Activated B cell treated with CpG ODN at 0.5 μM for 24 hours (primary cell): ENCODE measurements at regions of chr5 and their contacts with region 1.

Region 1: GRCh38 chr5:112529525-112529924 is 110.4 kb upstream of the EPB41L4A start:
- DNase-seq: no peak
- ATAC-seq: peak; percentile 53
- H3K4me3 Mint-ChIP-seq: no peak overlapping the region
- H3K27ac Mint-ChIP-seq: peak overlapping the region; percentile 48
- H3K4me1 Mint-ChIP-seq: peaks cover 96% of the 10 kb centered on the region
- H3K27me3 Mint-ChIP-seq: no peaks in the 10 kb centered on the region
- CTCF ChIP-seq: no peak

Region 2: GRCh38 chr5:112160652-112161391 is 368.7 kb before region 1 on chr5:
- CTCF ChIA-PET with region 1: interaction called, 6 read pairs
- POLR2A ChIA-PET with region 1: interaction called, 6 read pairs
- intact Hi-C with region 1: loop called (anchors 1 kb)
- DNase-seq: peak; percentile 93
- ATAC-seq: peak; percentile 99
- H3K4me3 Mint-ChIP-seq: peak overlapping the region; percentile 97
- H3K27ac Mint-ChIP-seq: peak overlapping the region; percentile 82
- H3K4me1 Mint-ChIP-seq: peaks cover 25% of the 10 kb centered on the region
- H3K27me3 Mint-ChIP-seq: no peaks in the 10 kb centered on the region
- CTCF ChIP-seq: peak; percentile 89

Region 3: GRCh38 chr5:112270299-112271293 is 258.9 kb before region 1 on chr5:
- CTCF ChIA-PET with region 1: no interaction called
- POLR2A ChIA-PET with region 1: no interaction called
- intact Hi-C with region 1: no loop called
- DNase-seq: no peak
- ATAC-seq: no peak
- H3K4me3 Mint-ChIP-seq: no peak overlapping the region
- H3K27ac Mint-ChIP-seq: no peak overlapping the region
- H3K4me1 Mint-ChIP-seq: no peaks in the 10 kb centered on the region
- H3K27me3 Mint-ChIP-seq: no peaks in the 10 kb centered on the region
- CTCF ChIP-seq: no peak

Region 4: GRCh38 chr5:112346411-112347044 is 183.0 kb before region 1 on chr5:
- CTCF ChIA-PET with region 1: no interaction called
- POLR2A ChIA-PET with region 1: no interaction called
- intact Hi-C with region 1: loop called (anchors 10 kb)
- DNase-seq: no peak
- ATAC-seq: no peak
- H3K4me3 Mint-ChIP-seq: no peak overlapping the region
- H3K27ac Mint-ChIP-seq: no peak overlapping the region
- H3K4me1 Mint-ChIP-seq: no peaks in the 10 kb centered on the region
- H3K27me3 Mint-ChIP-seq: no peaks in the 10 kb centered on the region
- CTCF ChIP-seq: no peak

Region 5: DNA sequence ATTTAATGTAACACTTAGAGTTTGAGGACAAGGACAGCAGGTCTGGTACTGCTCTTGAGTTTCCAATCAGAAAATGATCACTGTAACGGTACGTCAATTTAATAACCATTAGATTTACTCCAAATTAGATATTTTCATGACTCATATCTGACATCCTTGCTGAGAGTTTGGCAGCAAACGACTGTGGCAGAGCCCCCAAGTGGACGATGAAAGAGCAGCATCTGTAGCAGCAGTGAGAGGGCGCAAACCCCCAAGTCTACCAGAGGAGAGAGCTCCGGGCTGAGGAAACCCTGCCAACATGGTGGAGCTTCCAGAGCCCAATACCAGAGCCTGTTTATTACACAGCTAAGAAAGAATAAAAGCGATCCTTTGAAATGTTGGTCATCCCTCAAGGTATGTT is 37.2 kb before region 1 on chr5:
- CTCF ChIA-PET with region 1: interaction called, 8 read pairs
- POLR2A ChIA-PET with region 1: no interaction called
- intact Hi-C with region 1: loop called (anchors 1 kb)
- DNase-seq: no peak
- ATAC-seq: peak; percentile 98
- H3K4me3 Mint-ChIP-seq: no peak overlapping the region
- H3K27ac Mint-ChIP-seq: no peak overlapping the region
- H3K4me1 Mint-ChIP-seq: peaks cover 7% of the 10 kb centered on the region
- H3K27me3 Mint-ChIP-seq: no peaks in the 10 kb centered on the region
- CTCF ChIP-seq: no peak

Region 6: GRCh38 chr5:112860929-112861637 is 331.6 kb after region 1 on chr5 and contains the start of gene SRP19:
- CTCF ChIA-PET with region 1: no interaction called
- POLR2A ChIA-PET with region 1: interaction called, 7 read pairs
- intact Hi-C with region 1: loop called (anchors 2 kb)
- DNase-seq: peak; percentile 83
- ATAC-seq: peak; percentile 94
- H3K4me3 Mint-ChIP-seq: peak within 1 kb of the TSS; percentile 96
- H3K27ac Mint-ChIP-seq: peak within 1 kb of the TSS; percentile 96
- H3K4me1 Mint-ChIP-seq: peaks cover 34% of the 10 kb centered on the region
- H3K27me3 Mint-ChIP-seq: peaks cover 4% of the 10 kb centered on the region
- CTCF ChIP-seq: no peak
- total RNA-seq, gene SRP19: 50.4 and 51.6 TPM in 2 replicates

Region 7: GRCh38 chr5:112976432-112977309 is 447.1 kb after region 1 on chr5 and contains the start of gene DCP2:
- CTCF ChIA-PET with region 1: no interaction called
- POLR2A ChIA-PET with region 1: no interaction called
- intact Hi-C with region 1: loop called (anchors 5 kb)
- DNase-seq: peak; percentile 93
- ATAC-seq: peak; percentile 98
- H3K4me3 Mint-ChIP-seq: peak within 1 kb of the TSS; percentile 100
- H3K27ac Mint-ChIP-seq: peak within 1 kb of the TSS; percentile 96
- H3K4me1 Mint-ChIP-seq: peaks cover 53% of the 10 kb centered on the region
- H3K27me3 Mint-ChIP-seq: no peaks in the 10 kb centered on the region
- CTCF ChIP-seq: no peak
- total RNA-seq, gene DCP2: 53.5 and 56.0 TPM in 2 replicates